Tibial artery (tissue), 4 donors: ENCODE measurements at regions of chr12 and their contacts with region 1.

Region 1: GRCh38 chr12:71947645-71948105 is 9.0 kb downstream of the TPH2 start:
- DNase-seq: no peak
- H3K4me3 ChIP-seq: no peak overlapping the region
- H3K27ac ChIP-seq: no peak overlapping the region
- H3K4me1 ChIP-seq: no peaks in the 10 kb centered on the region
- H3K27me3 ChIP-seq: peaks cover 0 to 21% of the 10 kb centered on the region in 2 donors
- CTCF ChIP-seq: no peak

Region 2: GRCh38 chr12:71124833-71125460 is 822.7 kb before region 1 on chr12:
- intact Hi-C with region 1: no loop called
- DNase-seq: no peak
- H3K4me3 ChIP-seq: no peak overlapping the region
- H3K27ac ChIP-seq: peak overlapping the region in 1 of 2 donors; percentile 8
- H3K4me1 ChIP-seq: peaks cover 0 to 19% (median 0%) of the 10 kb centered on the region in 4 donors
- H3K27me3 ChIP-seq: no peaks in the 10 kb centered on the region
- CTCF ChIP-seq: no peak

Region 3: GRCh38 chr12:72162875-72163274 is 215.2 kb after region 1 on chr12:
- intact Hi-C with region 1: loop called (anchors 5 kb)
- DNase-seq: no peak
- H3K4me3 ChIP-seq: no peak overlapping the region
- H3K27ac ChIP-seq: no peak overlapping the region
- H3K4me1 ChIP-seq: no peaks in the 10 kb centered on the region
- H3K27me3 ChIP-seq: no peaks in the 10 kb centered on the region
- CTCF ChIP-seq: no peak